Astrocyte of the cerebellum (primary cell): ENCODE measurements at regions of chr6 and their contacts with region 1.

Region 1: DNA sequence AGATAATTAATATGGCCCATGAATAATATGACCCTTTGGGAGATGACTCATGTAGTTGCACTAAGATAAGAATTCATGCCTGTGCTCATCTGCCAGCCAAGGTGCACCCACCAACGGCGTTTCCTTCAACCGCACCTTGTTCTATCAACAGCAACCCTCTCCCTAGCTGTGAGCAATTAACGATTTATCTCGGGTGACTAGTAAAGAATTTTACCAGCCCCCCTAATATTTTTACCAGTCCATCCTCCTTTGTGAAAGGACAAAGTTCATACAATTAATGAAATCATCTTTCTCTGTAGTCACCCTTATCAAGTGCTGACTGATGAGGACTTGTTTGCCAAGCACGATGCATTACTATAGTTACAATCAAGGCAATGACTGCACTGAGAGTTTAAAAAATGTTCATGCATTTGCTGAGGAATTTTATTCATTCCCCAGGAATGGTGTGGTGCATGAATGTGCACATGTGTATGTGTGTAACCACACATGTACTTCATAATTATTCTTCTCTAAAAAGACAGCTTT is 118.7 kb downstream of the SMOC2 start:
- DNase-seq: no peak
- H3K4me3 ChIP-seq: no peak overlapping the region
- CTCF ChIP-seq: no peak

Region 2: DNA sequence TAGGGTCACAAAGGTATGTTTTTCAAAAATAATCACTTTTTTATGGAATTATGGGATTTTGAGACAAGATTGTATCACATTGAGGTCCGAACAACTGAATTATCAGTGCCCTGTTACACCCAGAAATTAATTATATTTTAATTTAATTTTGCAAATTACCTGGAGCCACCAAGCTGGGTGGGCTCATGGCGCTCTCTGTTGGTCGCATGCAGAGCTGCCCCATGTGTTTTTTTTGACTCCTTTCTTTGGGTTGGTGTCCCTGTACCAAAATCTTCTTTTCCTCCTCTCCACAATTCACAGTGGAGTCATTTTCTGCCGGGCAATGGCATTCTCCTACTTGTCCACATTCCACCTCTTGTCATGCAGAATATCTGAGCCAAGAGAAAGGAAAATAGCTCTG is 441.7 kb before region 1 on chr6:
- in situ Hi-C with region 1: no loop called
- DNase-seq: no peak
- H3K4me3 ChIP-seq: no peak overlapping the region
- CTCF ChIP-seq: peak; percentile 44

Region 3: DNA sequence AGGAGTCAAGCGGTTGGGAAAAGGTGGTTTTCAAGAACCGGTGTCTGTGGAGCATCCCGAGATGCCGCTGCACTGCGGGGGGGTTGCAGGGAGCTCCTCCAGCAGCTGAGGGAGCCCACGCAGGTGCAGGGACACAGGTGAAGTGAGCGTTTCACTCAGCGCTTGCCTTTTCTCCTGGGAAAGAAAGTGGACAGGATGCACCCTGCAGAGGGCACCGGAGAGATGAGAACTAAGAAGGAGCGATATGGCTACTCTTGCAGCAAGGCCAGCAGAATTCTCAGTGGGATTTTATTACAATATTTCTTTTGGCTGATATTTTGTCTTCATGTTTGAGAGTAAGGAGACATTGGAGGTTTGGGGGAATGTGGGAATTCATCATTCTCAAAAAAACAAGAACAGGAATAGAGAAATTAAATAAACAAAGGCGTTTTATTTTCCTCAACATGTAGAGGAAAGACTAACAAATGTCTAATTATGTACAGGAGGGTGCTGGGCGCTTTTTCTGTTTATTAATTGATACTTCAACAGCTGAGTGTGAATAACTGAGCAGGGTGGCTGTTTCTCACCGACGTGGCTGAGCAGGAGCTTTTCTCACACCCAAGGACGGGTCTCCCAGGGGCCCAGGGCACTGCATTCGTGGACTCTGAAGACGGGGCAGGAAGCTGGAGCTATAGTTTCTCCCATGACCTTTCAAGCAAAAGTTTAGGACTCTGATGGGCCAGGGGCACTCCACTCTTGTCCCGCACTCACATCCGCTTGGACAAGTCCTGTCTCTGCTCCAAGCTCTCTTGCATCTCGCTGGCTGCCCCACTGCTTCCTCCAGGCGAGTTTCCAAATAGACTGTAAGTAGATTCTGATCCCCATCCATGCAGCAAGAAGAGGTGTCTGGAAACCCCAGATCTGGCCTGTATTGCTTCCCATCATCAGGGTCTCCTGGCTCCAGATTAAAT is 57.5 kb after region 1 on chr6:
- in situ Hi-C with region 1: loop called (anchors 5 kb)
- DNase-seq: no peak
- H3K4me3 ChIP-seq: no peak overlapping the region
- CTCF ChIP-seq: no peak

Region 4: DNA sequence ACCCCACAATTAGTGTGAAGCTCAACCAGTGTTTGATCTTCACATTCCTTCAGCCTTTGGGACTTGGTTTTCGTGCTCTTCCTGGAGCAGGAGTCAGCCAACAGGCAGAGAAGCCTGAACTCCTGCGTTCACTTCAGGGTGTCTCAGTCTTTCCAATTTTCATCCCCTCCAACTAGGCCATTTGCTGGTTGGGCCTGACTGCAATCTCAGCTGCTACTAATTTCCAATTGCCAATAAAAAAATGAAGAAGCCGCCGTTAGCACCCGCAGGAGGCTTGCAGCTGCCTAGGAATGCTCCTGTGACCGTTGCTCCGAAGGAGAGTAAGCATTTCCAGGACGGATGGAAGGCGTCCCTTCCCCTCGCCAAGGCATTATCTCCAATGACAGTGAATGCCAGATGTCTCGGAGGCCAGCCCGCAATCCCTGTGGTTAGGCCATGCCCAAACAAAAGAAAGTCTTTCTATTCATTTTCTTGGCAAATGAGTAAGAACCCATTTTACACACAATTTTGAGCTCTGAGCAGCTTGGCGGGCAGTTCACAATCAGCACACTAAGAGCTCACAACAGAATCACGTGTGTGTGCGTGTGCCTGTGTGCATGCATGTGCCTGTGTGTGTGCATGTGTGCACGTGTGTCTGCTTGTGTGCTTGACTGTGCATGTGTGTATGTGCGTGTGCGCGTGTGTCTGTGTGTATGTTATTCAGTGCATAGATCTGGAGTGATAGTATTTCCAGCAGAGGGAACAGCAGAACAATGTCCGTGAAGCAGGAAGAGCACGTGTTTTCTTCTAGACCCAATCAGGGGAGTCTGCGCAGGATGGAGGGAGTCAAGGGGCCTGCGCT is 182.5 kb after region 1 on chr6:
- in situ Hi-C with region 1: no loop called
- DNase-seq: peak; percentile 6
- H3K4me3 ChIP-seq: no peak overlapping the region
- CTCF ChIP-seq: no peak